HepG2 (cell line): ENCODE measurements at regions of chr17 and their contacts with region 1.

Region 1: DNA sequence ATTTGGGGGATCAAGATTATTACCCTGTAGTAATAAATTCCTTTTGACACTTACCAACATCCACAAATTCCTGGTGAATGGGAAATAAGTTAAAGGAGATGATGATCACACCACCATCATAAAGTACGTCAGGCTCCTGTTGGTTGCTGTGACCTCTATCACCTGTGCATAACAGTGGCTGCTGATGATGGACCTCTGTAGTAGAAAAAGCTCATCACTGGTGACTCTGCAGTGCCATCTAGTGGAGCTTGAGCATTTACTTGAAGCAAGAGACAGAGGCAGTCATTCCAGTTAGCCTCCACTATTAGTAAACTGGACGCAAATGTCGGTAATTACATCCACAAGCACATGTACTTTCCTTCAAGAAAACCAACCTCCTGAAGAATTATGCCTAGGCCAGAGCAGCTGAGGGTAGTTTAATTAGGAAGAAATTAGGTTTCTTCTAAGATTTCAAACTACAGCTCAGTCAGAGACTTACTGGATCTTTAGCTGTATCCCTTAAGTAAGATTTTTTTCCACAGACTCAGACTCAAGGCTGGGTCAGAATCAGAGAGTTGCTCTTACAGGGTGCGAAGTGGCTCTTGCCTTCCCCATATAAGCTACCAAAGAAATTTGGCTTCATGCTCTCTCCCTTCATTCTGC is 39.3 kb downstream of the CYB561 start:
- DNase-seq: peak; percentile 92
- ATAC-seq: peak; percentile 98
- H3K4me3 ChIP-seq: no peak overlapping the region
- H3K27ac ChIP-seq: no peak overlapping the region
- H3K4me1 ChIP-seq: peaks cover 6% of the 10 kb centered on the region
- H3K27me3 ChIP-seq: peaks cover 1 to 15% of the 10 kb centered on the region in 2 experiments
- CTCF ChIP-seq: peak; percentile 92
- EP300 ChIP-seq: no peak
- POLR2A ChIP-seq: no peak
- RAD21 ChIP-seq: peak; percentile 82

Region 2: GRCh38 chr17:62671583-62672312 is 735.1 kb before region 1 on chr17:
- CTCF ChIA-PET with region 1: interaction called, 3 read pairs
- POLR2A ChIA-PET with region 1: no interaction called
- in situ Hi-C with region 1: no loop called
- intact Hi-C with region 1: loop called (anchors 1 kb)
- DNase-seq: peak; percentile 36
- ATAC-seq: peak; percentile 62
- H3K4me3 ChIP-seq: no peak overlapping the region; a peak in 1 of 6 replicates
- H3K27ac ChIP-seq: no peak overlapping the region
- H3K4me1 ChIP-seq: peaks cover 5% of the 10 kb centered on the region; the same call in 1 of the 2 replicates
- H3K27me3 ChIP-seq: peaks cover 7 to 48% of the 10 kb centered on the region in 2 experiments; a peak in 3 of 5 replicates
- CTCF ChIP-seq: peak; percentile 72
- EP300 ChIP-seq: no peak
- POLR2A ChIP-seq: no peak
- RAD21 ChIP-seq: no peak

Region 3: DNA sequence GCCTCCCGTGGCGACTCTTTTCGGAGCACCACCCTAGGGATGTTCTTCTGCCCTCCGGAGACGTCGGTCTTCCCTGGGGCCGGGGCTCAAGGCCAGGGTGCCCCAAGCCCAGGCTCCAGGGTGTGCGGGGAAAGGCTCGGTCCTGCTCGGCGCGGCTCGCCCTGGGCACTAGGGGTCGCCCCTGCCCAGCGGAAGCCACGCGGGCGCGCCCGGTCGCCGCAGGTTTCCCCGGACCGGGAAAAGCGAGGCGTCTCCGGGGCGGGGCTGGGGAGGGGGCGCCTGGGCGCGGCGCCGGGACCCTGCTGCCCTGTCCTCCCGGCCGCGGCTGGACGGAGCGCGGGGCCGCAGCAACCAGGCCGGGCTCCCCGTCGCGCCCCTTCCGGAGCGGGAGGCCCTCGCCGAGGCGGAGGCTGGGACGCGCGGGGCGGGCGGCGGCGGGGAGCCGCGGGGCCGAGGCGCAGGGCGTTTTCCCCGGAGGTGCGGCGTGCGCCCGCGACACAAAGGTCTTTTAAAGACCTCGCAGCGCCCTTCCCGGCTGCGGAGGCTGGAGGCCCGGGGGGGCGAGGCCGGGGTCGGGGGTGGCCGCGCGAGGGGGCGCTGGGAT is 702.9 kb before region 1 on chr17:
- CTCF ChIA-PET with region 1: interaction called, 11 read pairs
- POLR2A ChIA-PET with region 1: no interaction called
- in situ Hi-C with region 1: no loop called
- intact Hi-C with region 1: no loop called
- DNase-seq: no peak
- ATAC-seq: peak; percentile 95
- H3K4me3 ChIP-seq: peak overlapping the region in 2 of 3 experiments; percentile 40 to 70; a peak in 3 of 6 replicates
- H3K27ac ChIP-seq: no peak overlapping the region
- H3K4me1 ChIP-seq: peaks cover 11% of the 10 kb centered on the region; the same call in 1 of the 2 replicates
- H3K27me3 ChIP-seq: peaks cover 21 to 69% of the 10 kb centered on the region in 2 experiments
- CTCF ChIP-seq: peak; percentile 93
- EP300 ChIP-seq: no peak
- POLR2A ChIP-seq: no peak
- RAD21 ChIP-seq: peak; percentile 98

Region 4: GRCh38 chr17:62995377-62995885 is 411.4 kb before region 1 on chr17:
- CTCF ChIA-PET with region 1: interaction called, 11 read pairs
- POLR2A ChIA-PET with region 1: no interaction called
- in situ Hi-C with region 1: no loop called
- intact Hi-C with region 1: loop called (anchors 1 kb)
- DNase-seq: peak; percentile 20
- ATAC-seq: peak; percentile 88
- H3K4me3 ChIP-seq: no peak overlapping the region
- H3K27ac ChIP-seq: no peak overlapping the region
- H3K4me1 ChIP-seq: no peaks in the 10 kb centered on the region
- H3K27me3 ChIP-seq: no peaks in the 10 kb centered on the region; a peak in 1 of 5 replicates
- CTCF ChIP-seq: peak; percentile 63
- EP300 ChIP-seq: no peak
- POLR2A ChIP-seq: no peak
- RAD21 ChIP-seq: no peak

Region 5: GRCh38 chr17:63082273-63082993 is 324.4 kb before region 1 on chr17:
- CTCF ChIA-PET with region 1: interaction called, 6 read pairs
- POLR2A ChIA-PET with region 1: no interaction called
- in situ Hi-C with region 1: no loop called
- intact Hi-C with region 1: loop called (anchors 1 kb)
- DNase-seq: peak; percentile 10
- ATAC-seq: no peak
- H3K4me3 ChIP-seq: no peak overlapping the region
- H3K27ac ChIP-seq: no peak overlapping the region
- H3K4me1 ChIP-seq: no peaks in the 10 kb centered on the region
- H3K27me3 ChIP-seq: no peaks in the 10 kb centered on the region
- CTCF ChIP-seq: peak; percentile 19; the same call in 1 of the 2 replicates
- EP300 ChIP-seq: no peak
- POLR2A ChIP-seq: no peak
- RAD21 ChIP-seq: no peak

Region 6: DNA sequence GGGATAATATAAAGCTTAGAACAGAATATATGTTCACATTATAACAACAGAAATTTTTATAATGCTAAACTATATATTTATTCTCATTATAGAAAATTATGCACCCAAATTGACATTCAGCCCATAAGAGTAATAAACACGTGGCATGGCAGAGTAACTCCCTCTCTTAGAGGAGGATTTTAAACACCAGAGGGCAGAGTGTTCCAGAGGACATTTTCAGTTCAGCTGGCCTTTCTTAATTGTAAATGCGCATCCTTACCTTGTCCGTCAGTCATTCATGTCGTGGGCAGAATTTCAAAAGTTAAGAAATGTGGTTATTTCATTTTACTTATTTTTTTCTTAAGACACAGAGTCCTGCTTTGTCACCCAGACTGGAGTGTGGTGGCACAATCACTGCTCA is 293.6 kb before region 1 on chr17:
- CTCF ChIA-PET with region 1: interaction called, 7 read pairs
- POLR2A ChIA-PET with region 1: no interaction called
- in situ Hi-C with region 1: loop called (anchors 10 kb)
- intact Hi-C with region 1: no loop called
- DNase-seq: peak; percentile 19
- ATAC-seq: peak; percentile 50; the same call in 1 of the 3 replicates
- H3K4me3 ChIP-seq: no peak overlapping the region
- H3K27ac ChIP-seq: no peak overlapping the region
- H3K4me1 ChIP-seq: no peaks in the 10 kb centered on the region
- H3K27me3 ChIP-seq: no peaks in the 10 kb centered on the region
- CTCF ChIP-seq: peak; percentile 37; the same call in 1 of the 2 replicates
- EP300 ChIP-seq: no peak
- POLR2A ChIP-seq: no peak
- RAD21 ChIP-seq: no peak

Region 7: GRCh38 chr17:63316100-63316499 is 90.7 kb before region 1 on chr17:
- CTCF ChIA-PET with region 1: no interaction called
- POLR2A ChIA-PET with region 1: no interaction called
- in situ Hi-C with region 1: no loop called
- intact Hi-C with region 1: no loop called
- DNase-seq: no peak
- ATAC-seq: no peak
- H3K4me3 ChIP-seq: no peak overlapping the region
- H3K27ac ChIP-seq: no peak overlapping the region
- H3K4me1 ChIP-seq: no peaks in the 10 kb centered on the region
- H3K27me3 ChIP-seq: peaks cover 0 to 6% of the 10 kb centered on the region in 2 experiments; a peak in 2 of 5 replicates
- CTCF ChIP-seq: no peak
- EP300 ChIP-seq: no peak
- POLR2A ChIP-seq: no peak
- RAD21 ChIP-seq: no peak

Region 8: GRCh38 chr17:63523253-63523855 is 116.5 kb after region 1 on chr17 and contains the start of gene KCNH6:
- CTCF ChIA-PET with region 1: no interaction called
- POLR2A ChIA-PET with region 1: no interaction called
- in situ Hi-C with region 1: no loop called
- intact Hi-C with region 1: no loop called
- DNase-seq: no peak
- ATAC-seq: peak; percentile 4
- H3K4me3 ChIP-seq: peak within 1 kb of the TSS in 1 of 3 experiments; percentile 26; a peak in 1 of 6 replicates
- H3K27ac ChIP-seq: no peak within 1 kb of the TSS
- H3K4me1 ChIP-seq: peaks cover 49% of the 10 kb centered on the region
- H3K27me3 ChIP-seq: peaks cover 5 to 67% of the 10 kb centered on the region in 2 experiments
- CTCF ChIP-seq: no peak
- EP300 ChIP-seq: no peak
- POLR2A ChIP-seq: no peak
- RAD21 ChIP-seq: no peak
- total RNA-seq, gene KCNH6: 0.08 and 0.18 TPM in 2 replicates